ENCODE measurements at regions of chr13 and their contacts with region 1.

Region 1: DNA sequence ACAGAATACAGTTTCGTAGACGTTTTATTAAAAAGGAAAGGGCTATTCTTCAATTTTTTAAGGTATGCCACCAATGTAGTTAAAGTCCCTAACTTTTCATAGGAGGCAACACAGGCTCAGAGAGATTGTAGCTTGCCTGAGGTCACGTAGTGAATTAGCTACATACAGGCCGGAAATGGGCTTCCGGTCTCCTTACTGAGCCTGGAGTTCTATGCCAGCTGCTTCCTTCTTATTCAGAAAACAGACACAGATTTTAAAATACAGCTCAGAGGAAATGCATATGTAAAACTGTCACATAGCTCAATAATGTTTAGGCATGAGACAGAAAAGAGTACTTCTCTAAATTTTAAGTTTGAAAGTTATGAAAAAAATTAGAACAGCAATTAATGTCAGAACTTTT is 85.4 kb upstream of the TUBA3C start:
- DNase-seq: peak; percentile 95
- H3K4me3 ChIP-seq: peak overlapping the region; percentile 29
- H3K27ac ChIP-seq: peak overlapping the region; percentile 96
- H3K4me1 ChIP-seq: peaks cover 46% of the 10 kb centered on the region
- H3K27me3 ChIP-seq: no peaks in the 10 kb centered on the region
- CTCF ChIP-seq: no peak

Region 2: GRCh38 chr13:19185086-19185864 is 81.7 kb before region 1 on chr13:
- CTCF ChIA-PET with region 1: no interaction called
- POLR2A ChIA-PET with region 1: no interaction called
- intact Hi-C with region 1: loop called (anchors 1 kb)
- DNase-seq: no peak
- H3K4me3 ChIP-seq: no peak overlapping the region
- H3K27ac ChIP-seq: peak overlapping the region; percentile 22
- H3K4me1 ChIP-seq: peaks cover 8% of the 10 kb centered on the region
- H3K27me3 ChIP-seq: no peaks in the 10 kb centered on the region
- CTCF ChIP-seq: no peak

Region 3: GRCh38 chr13:19289180-19289579 is 22.2 kb after region 1 on chr13:
- CTCF ChIA-PET with region 1: no interaction called
- POLR2A ChIA-PET with region 1: no interaction called
- intact Hi-C with region 1: no loop called
- DNase-seq: no peak
- H3K4me3 ChIP-seq: no peak overlapping the region
- H3K27ac ChIP-seq: no peak overlapping the region
- H3K4me1 ChIP-seq: no peaks in the 10 kb centered on the region
- H3K27me3 ChIP-seq: no peaks in the 10 kb centered on the region
- CTCF ChIP-seq: no peak